ENCODE measurements at regions of chr7 and their contacts with region 1.

Region 1: GRCh38 chr7:74026903-74027551 is 946 bp upstream of the ELN start:
- DNase-seq: peak; percentile 74 to 97 (median 89)

Region 2: GRCh38 chr7:73865738-73866445 is 161.1 kb before region 1 on chr7:
- intact Hi-C with region 1: loop called (anchors 2 kb)
- DNase-seq: peak in 7 of 10 donors; percentile 26 to 84 (median 40)

Region 3: GRCh38 chr7:73983437-73984164 is 43.4 kb before region 1 on chr7:
- intact Hi-C with region 1: loop called (anchors 5 kb)
- DNase-seq: peak in 2 of 10 donors; percentile 74 to 77

Measured in posterior cingulate gyrus (tissue), 11 donors.